ENCODE measurements at regions of chr1 and their contacts with region 1.

Region 1: DNA sequence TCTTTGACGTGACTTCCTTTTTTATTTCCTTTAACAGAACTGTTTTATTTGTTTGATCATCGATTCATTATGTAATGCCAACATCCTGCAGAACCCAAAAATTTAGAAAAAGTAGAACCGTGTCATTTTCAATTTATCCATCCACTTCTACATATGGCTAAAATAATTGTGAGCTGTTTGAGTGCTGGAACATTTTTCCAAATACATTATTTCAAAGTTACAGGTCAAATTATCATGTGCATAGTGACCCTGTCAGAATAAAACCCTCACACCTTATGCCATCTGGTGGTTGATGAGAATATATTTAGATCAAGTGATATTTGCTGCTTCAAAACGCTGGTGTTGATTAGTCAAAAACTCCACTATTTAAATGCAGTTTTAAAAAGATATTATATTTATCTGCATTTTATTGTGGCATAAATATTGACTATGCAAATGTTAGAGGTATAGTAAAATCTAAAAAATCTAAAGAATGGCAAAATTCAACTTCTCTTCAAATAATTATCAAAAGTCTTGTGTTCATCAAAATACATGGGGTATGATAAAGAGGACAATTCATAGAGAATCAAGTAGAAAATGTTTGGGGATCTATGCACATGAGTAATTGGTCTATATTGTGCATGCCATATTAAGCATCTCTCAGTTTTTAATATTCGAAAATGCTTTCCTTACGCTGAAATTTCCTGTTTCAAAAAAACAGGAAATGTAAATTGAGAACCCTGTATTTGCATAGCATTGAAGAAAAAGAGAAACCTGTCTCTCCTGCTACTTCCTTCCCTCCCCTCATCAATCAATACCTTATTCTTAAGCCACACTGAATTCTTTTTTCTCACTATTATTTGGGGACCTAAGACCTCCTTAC is 39.7 kb downstream of the UBE2U start:
- DNase-seq: no peak
- ATAC-seq: peak in 1 of 2 donors; percentile 51
- H3K4me3 ChIP-seq: no peak overlapping the region
- H3K27ac ChIP-seq: no peak overlapping the region
- H3K4me1 ChIP-seq: no peaks in the 10 kb centered on the region
- H3K27me3 ChIP-seq: no peaks in the 10 kb centered on the region
- CTCF ChIP-seq: peak in 4 of 5 experiments; percentile 27 to 41 (median 37)
- POLR2A ChIP-seq: no peak

Region 2: DNA sequence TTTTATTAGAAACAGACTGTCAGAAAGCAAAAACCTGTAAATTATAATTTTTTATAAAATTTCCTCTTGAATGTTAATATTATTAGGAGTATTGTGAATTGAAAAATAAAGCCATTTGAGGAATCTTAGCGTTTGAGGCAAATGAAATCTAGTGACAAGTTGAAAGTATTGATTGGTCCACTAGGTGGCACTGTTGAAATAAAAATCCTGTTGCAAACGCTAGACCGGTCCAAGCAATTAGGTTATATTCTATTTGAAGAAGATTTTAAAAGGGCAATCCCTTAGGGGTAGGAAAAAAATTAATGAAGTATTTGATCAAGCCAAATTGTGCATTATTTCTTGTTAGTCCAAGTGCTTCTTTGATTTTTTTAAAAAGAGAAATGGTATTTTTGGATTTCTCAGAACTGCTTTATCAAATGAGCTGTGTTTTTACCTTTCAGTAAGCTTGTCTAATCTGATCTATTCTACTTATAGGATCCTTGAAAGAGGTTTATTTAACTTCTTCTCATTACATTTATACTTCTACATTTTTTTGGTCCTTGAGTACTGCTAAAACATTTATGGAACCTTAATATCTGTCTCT is 1401.4 kb before region 1 on chr1:
- in situ Hi-C with region 1: no loop called
- intact Hi-C with region 1: loop called (anchors 10 kb)
- DNase-seq: peak in 1 of 2 donors; percentile 3
- ATAC-seq: peak; percentile 58 to 86
- H3K4me3 ChIP-seq: no peak overlapping the region
- H3K27ac ChIP-seq: no peak overlapping the region
- H3K4me1 ChIP-seq: peaks cover 4% of the 10 kb centered on the region in 2 donors
- H3K27me3 ChIP-seq: no peaks in the 10 kb centered on the region
- CTCF ChIP-seq: peak; percentile 40 to 72 (median 51)
- POLR2A ChIP-seq: no peak

Region 3: DNA sequence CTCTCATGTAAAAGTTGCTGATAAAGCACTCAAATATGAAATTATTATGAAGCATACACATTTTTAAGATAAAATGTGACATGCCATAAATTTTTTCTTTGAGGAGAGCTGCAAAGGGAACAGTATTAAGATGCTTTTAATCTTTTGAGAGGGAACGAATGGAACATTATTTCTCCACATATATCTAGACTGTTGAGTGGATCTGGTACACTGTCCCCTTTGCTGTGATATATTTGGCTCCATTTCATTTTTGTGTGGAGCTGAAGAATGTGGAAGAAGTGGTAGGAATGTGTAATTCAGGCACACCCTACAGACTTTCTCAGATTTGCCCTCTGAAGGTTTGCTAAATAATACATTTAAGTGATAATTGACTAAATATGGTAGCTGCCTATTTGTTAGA is 618.2 kb before region 1 on chr1:
- in situ Hi-C with region 1: loop called in 1 of 4 experiments (anchors 5 kb)
- intact Hi-C with region 1: no loop called
- DNase-seq: no peak
- ATAC-seq: no peak
- H3K4me3 ChIP-seq: peak overlapping the region in 1 of 4 donors; percentile 22
- H3K27ac ChIP-seq: peak overlapping the region in 3 of 4 donors; percentile 94 to 99 (median 98)
- H3K4me1 ChIP-seq: peaks cover 76 to 81% of the 10 kb centered on the region in 2 donors
- H3K27me3 ChIP-seq: no peaks in the 10 kb centered on the region
- CTCF ChIP-seq: peak in 1 of 5 experiments; percentile 11
- POLR2A ChIP-seq: no peak

Region 4: GRCh38 chr1:63691701-63692425 is 551.3 kb before region 1 on chr1:
- in situ Hi-C with region 1: loop called in 3 of 4 experiments (anchors 5 to 25 kb)
- intact Hi-C with region 1: loop called (anchors 1 kb)
- DNase-seq: peak; percentile 49 to 50
- ATAC-seq: peak; percentile 95 to 96
- H3K4me3 ChIP-seq: no peak overlapping the region
- H3K27ac ChIP-seq: no peak overlapping the region
- H3K4me1 ChIP-seq: peaks cover 5 to 7% of the 10 kb centered on the region in 2 donors
- H3K27me3 ChIP-seq: no peaks in the 10 kb centered on the region
- CTCF ChIP-seq: peak; percentile 59 to 78 (median 65)
- POLR2A ChIP-seq: no peak

Region 5: DNA sequence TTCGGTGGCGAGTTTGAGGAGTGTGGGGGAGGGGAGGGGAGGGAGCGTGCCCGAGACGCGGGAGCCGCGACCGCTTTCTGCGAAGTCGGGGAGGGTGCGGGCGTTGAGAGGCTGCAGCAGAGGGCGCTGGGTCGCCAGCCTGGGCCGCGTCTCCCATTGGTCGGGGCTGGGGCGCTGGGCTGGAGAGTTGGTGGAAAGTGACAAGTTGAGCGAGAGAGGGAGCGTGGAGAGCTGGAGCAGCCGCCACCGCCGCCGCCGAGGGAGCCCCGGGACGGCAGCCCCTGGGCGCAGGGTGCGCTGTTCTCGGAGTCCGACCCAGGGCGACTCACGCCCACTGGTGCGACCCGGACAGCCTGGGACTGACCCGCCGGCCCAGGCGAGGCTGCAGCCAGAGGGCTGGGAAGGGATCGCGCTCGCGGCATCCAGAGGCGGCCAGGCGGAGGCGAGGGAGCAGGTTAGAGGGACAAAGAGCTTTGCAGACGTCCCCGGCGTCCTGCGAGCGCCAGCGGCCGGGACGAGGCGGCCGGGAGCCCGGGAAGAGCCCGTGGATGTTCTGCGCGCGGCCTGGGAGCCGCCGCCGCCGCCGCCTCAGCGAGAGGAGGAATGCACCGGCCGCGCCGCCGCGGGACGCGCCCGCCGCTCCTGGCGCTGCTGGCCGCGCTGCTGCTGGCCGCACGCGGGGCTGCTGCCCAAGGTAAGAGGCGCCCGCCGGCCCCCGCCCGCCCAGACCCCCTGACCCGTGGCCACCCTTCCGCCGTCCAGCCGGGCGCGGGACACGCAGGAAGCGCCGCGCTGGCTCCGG is 469.1 kb before region 1 on chr1 and contains the start of gene ROR1:
- in situ Hi-C with region 1: no loop called
- intact Hi-C with region 1: loop called (anchors 5 kb)
- DNase-seq: peak; percentile 83 to 86
- ATAC-seq: peak; percentile 93 to 95
- H3K4me3 ChIP-seq: peak within 1 kb of the TSS; percentile 68 to 89 (median 74)
- H3K27ac ChIP-seq: peak within 1 kb of the TSS; percentile 78 to 86 (median 85)
- H3K4me1 ChIP-seq: peaks cover 7 to 23% of the 10 kb centered on the region in 2 donors
- H3K27me3 ChIP-seq: no peaks in the 10 kb centered on the region
- CTCF ChIP-seq: peak; percentile 39 to 82 (median 67)
- POLR2A ChIP-seq: peak; percentile 37 to 57
- total RNA-seq, gene ROR1: 2.5 to 4.3 (median 3.6) TPM

Region 6: DNA sequence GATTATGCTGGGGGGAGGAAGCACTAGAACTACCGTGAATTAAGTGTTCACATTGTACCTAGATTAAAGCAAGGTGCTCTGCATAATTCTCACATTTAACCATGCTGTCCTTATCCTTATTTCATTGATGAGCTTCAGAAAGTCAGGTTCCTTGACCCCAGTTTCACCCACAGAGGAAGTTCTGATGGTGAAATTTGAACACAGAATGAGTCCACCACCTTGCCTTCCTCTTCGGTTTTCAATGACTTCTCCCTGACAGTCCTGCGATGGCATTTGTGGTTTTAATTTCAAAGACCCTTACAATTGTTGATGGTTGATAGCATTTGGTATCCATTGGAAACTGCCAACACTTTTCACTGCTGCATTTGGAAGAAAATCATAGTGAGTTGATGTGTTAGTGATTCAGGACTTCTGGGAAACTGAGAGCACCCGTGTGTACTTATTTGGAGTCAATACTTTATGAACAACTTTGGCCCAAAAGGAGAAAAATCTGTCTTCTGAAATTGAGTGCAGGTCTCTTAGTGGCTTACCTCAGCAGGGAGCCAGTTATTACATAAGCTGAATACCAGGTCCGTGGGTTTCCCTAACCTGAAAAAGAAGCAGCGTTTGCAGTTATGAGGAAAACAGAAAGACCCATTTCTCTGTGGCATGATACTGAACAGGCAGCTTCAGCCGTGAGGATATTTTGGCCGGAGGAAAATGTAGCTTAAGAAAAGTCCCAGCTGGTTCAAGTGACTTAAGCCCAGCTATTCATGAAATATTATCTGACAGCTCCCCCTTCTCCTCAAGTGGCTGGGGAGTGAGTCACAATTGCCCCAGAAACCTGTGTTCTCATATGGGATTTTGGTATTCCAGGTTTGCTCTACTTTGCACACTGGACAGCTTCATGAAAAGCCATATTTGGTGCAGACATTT is 421.8 kb before region 1 on chr1:
- in situ Hi-C with region 1: no loop called
- intact Hi-C with region 1: no loop called
- DNase-seq: no peak
- ATAC-seq: peak; percentile 42 to 49
- H3K4me3 ChIP-seq: no peak overlapping the region
- H3K27ac ChIP-seq: no peak overlapping the region
- H3K4me1 ChIP-seq: peaks cover 12 to 17% of the 10 kb centered on the region in 2 donors
- H3K27me3 ChIP-seq: no peaks in the 10 kb centered on the region
- CTCF ChIP-seq: no peak
- POLR2A ChIP-seq: no peak

Region 7: DNA sequence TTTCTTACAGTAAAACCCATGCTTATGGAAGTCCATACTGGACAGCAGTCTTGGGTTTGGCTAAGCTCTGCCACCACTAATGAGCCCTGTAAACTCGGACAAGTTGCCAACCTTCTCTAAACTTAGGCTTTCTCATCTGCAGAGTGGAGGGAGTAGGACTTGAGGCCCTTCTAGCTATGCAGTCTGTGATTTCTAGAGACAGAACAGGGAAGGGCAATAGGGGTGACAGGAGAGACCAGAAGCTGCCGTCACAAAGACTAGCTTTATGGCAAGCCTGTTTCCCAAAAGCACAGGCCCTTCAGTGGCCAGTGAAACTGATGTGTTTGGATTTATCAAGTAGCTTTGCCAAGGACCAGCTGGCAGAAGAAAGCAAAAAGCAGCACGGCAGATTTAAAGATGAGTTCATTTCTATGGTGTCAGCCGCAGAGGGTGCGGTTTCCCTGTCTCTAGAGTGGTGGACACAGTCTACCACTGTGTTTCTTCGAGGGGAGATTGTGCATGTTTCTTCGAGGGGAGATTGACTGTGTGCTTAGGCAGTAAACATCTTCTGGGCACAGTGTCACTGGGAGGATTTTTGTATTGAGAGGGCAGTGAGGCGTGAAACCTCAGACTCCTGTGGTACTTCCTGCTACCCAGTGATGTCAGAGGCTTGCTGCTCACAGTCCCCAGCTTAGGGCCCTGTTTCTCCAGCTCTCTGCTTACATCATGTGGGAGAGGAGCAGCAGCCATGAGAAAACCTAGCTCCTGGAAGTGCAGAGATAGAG is 350.3 kb before region 1 on chr1:
- in situ Hi-C with region 1: no loop called
- intact Hi-C with region 1: no loop called
- DNase-seq: no peak
- ATAC-seq: peak; percentile 21 to 33
- H3K4me3 ChIP-seq: no peak overlapping the region
- H3K27ac ChIP-seq: peak overlapping the region in 2 of 4 donors; percentile 7 to 43
- H3K4me1 ChIP-seq: peaks cover 0 to 10% of the 10 kb centered on the region in 2 donors
- H3K27me3 ChIP-seq: no peaks in the 10 kb centered on the region
- CTCF ChIP-seq: no peak
- POLR2A ChIP-seq: no peak

Measured in gastrocnemius medialis (tissue), 4 donors.